ENCODE measurements at regions of chr10 and their contacts with region 1.

Region 1: GRCh38 chr10:35126530-35127296 is at the start of gene CREM:
- DNase-seq: peak; percentile 100
- H3K4me3 Mint-ChIP-seq: peak within 1 kb of the TSS; percentile 81
- H3K27ac Mint-ChIP-seq: peak within 1 kb of the TSS; percentile 95
- H3K4me1 Mint-ChIP-seq: peaks cover 48% of the 10 kb centered on the region
- H3K27me3 Mint-ChIP-seq: no peaks in the 10 kb centered on the region
- total RNA-seq, gene CREM: 107 to 111 TPM

Region 2: GRCh38 chr10:34584164-34584563 is 542.5 kb before region 1 on chr10:
- CTCF ChIA-PET with region 1: no interaction called
- intact Hi-C with region 1: no loop called
- DNase-seq: no peak
- H3K4me3 Mint-ChIP-seq: no peak overlapping the region
- H3K27ac Mint-ChIP-seq: no peak overlapping the region
- H3K4me1 Mint-ChIP-seq: no peaks in the 10 kb centered on the region
- H3K27me3 Mint-ChIP-seq: peaks cover 2% of the 10 kb centered on the region

Region 3: GRCh38 chr10:34994565-34995142 is 132.1 kb before region 1 on chr10:
- CTCF ChIA-PET with region 1: interaction called, 9 read pairs
- intact Hi-C with region 1: loop called (anchors 2 kb)
- DNase-seq: peak; percentile 78
- H3K4me3 Mint-ChIP-seq: no peak overlapping the region
- H3K27ac Mint-ChIP-seq: peak overlapping the region; percentile 70
- H3K4me1 Mint-ChIP-seq: peaks cover 18% of the 10 kb centered on the region
- H3K27me3 Mint-ChIP-seq: no peaks in the 10 kb centered on the region

Region 4: DNA sequence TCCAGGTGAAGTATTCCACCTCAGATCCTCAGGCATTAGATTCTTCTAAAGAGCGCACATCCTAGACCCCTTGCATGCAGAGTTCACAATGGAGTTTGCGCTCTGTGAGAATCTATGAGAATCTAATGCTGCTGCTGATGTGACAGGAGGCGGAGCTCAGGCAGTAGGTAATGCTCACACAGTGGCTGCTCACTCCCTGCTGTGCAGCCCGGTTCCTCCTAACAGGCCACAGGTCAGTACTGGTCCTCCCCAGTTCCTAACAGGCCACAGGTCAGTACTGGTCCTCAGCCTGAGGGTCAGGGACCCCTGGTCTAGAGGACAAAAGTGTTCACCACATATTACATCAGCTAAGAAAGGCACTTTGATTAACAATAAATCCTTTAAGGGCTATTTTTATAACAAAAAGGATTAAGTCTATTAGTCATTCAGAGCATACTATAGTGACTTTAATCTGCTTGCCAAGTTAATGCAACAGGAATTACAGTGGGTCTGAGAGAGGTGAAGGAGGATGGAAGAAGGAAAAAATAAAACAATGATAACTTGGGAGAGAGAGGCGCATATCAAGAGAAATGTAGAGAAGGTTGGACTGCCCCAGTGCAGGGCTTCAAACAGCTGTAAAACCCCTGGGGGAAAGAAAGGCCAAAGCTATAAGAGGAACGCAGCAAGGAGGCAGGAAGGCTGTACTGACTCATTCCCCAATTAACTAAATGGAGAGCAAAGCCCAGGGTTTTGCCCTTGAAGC is 85.8 kb before region 1 on chr10:
- CTCF ChIA-PET with region 1: no interaction called
- intact Hi-C with region 1: no loop called
- DNase-seq: no peak
- H3K4me3 Mint-ChIP-seq: no peak overlapping the region
- H3K27ac Mint-ChIP-seq: peak overlapping the region; percentile 2
- H3K4me1 Mint-ChIP-seq: no peaks in the 10 kb centered on the region
- H3K27me3 Mint-ChIP-seq: no peaks in the 10 kb centered on the region

Region 5: GRCh38 chr10:35153716-35154479 is 27.2 kb after region 1 on chr10:
- CTCF ChIA-PET with region 1: interaction called, 6 read pairs
- intact Hi-C with region 1: loop called (anchors 1 kb)
- DNase-seq: no peak
- H3K4me3 Mint-ChIP-seq: no peak overlapping the region
- H3K27ac Mint-ChIP-seq: no peak overlapping the region
- H3K4me1 Mint-ChIP-seq: peaks cover 36% of the 10 kb centered on the region
- H3K27me3 Mint-ChIP-seq: no peaks in the 10 kb centered on the region

Region 6: DNA sequence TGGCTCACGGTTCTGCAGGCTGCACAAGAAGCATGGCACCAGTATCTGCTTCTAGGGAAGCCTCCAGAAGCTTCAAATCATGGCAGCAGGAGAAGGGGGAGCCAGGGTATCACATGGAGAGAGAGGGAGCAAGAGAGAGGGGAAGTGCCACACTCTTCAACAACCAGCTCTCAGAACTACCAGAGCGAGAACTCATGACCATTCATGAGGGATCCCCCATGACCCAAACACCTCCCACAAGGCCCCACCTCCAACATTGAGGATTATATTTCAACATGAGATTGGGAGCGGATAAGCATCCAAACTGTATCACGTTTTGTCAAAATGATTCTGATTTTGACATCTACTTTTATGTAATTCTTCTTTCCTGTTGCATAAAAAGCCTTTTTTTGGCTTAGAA is 38.4 kb after region 1 on chr10:
- CTCF ChIA-PET with region 1: no interaction called
- intact Hi-C with region 1: no loop called
- DNase-seq: no peak
- H3K4me3 Mint-ChIP-seq: no peak overlapping the region
- H3K27ac Mint-ChIP-seq: no peak overlapping the region
- H3K4me1 Mint-ChIP-seq: no peaks in the 10 kb centered on the region
- H3K27me3 Mint-ChIP-seq: no peaks in the 10 kb centered on the region

Region 7: DNA sequence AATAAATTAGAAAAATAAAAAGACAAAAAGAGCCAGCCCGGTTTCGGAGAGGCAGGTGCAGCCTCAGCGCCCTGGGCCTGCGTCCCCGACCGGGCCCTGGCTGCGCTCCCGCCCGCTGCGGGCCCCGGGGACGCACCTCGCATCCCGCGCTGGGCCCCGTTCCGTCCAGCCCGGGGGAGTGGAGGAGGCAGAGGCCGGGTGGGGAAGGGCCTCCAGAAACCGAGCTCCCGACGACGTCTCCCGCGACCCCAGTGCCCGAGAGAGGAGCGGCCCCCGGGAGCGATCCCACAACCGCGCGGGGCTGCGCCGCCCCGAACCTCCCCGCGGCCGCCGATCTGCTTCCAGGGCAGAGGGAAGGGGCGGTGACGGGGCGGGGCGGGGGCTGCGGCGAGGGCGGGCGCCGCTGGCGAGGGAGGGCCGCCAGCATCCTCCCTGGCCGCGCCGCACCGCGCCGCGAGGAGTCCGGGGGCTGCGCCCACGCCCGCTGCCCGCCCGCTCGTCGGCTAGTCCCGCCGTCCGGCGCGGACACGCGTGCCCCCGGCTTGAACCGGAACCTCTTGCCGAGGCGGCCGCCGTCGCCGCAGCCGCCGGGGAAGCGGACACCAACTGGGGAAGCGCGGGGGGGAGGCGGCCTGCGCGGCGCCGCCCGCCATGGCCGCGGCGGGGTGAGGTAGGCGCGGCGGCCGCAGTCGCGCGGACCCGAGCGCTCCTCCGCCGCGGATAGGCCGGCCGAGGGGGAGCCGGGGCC is 209.5 kb after region 1 on chr10 and contains the start of gene CCNY:
- CTCF ChIA-PET with region 1: interaction called, 3 read pairs
- intact Hi-C with region 1: loop called (anchors 1 kb)
- DNase-seq: peak; percentile 81
- H3K4me3 Mint-ChIP-seq: peak within 1 kb of the TSS; percentile 85
- H3K27ac Mint-ChIP-seq: peak within 1 kb of the TSS; percentile 87
- H3K4me1 Mint-ChIP-seq: peaks cover 71% of the 10 kb centered on the region
- H3K27me3 Mint-ChIP-seq: no peaks in the 10 kb centered on the region
- total RNA-seq, gene CCNY: 31.2 to 32.1 TPM

Region 8: GRCh38 chr10:35355971-35356724 is 229.4 kb after region 1 on chr10:
- CTCF ChIA-PET with region 1: no interaction called
- intact Hi-C with region 1: loop called (anchors 2 kb)
- DNase-seq: peak; percentile 31
- H3K4me3 Mint-ChIP-seq: peak overlapping the region; percentile 8
- H3K27ac Mint-ChIP-seq: peak overlapping the region; percentile 68
- H3K4me1 Mint-ChIP-seq: peaks cover 71% of the 10 kb centered on the region
- H3K27me3 Mint-ChIP-seq: no peaks in the 10 kb centered on the region

Region 9: GRCh38 chr10:35563261-35563891 is 436.7 kb after region 1 on chr10:
- CTCF ChIA-PET with region 1: interaction called, 6 read pairs
- intact Hi-C with region 1: loop called (anchors 2 kb)
- DNase-seq: peak; percentile 61
- H3K4me3 Mint-ChIP-seq: no peak overlapping the region
- H3K27ac Mint-ChIP-seq: no peak overlapping the region
- H3K4me1 Mint-ChIP-seq: peaks cover 2% of the 10 kb centered on the region
- H3K27me3 Mint-ChIP-seq: no peaks in the 10 kb centered on the region

Region 10: DNA sequence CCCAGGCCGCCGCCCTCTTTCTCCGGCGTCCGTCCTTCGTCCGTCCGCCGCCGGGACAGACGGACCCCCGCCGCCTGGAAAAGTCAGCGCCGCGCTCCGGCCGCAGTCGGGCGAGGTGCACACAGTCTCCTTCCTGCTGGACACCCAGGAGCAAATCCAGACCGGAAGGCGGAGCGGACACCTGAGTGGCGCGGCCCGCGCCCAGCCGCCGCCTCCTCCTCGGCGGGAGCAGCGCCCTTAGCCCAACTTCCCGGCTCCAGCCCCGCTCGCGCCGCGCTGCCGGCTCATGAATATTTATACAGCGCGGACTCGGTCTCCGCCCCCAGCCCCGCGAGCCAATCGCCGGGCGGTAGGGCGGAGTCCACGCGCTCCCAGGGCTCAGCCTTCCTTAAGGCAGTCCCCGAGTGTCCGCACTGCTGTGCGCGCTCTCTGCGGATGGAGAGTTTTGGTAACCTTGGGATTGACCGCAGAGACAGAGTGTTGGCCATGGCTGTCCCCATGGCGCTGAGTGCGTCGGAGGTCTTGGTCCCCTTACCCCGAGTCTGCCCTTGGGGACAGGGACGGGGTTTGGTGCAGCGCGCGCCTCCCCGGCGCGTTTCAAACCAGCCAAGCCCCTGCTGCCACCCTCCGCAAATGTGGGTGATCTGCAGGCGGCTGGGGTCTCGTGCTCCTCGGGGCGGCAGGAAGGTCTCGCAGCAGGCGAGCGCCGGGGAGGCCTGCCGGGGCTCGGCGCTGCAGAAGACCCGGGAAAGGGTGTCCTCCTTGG is 515.5 kb after region 1 on chr10 and contains the start of gene FZD8:
- CTCF ChIA-PET with region 1: no interaction called
- intact Hi-C with region 1: loop called (anchors 1 kb)
- DNase-seq: peak; percentile 75
- H3K4me3 Mint-ChIP-seq: peak within 1 kb of the TSS; percentile 78
- H3K27ac Mint-ChIP-seq: no peak within 1 kb of the TSS
- H3K4me1 Mint-ChIP-seq: peaks cover 19% of the 10 kb centered on the region
- H3K27me3 Mint-ChIP-seq: peaks cover 41% of the 10 kb centered on the region
- total RNA-seq, gene FZD8: 0.15 to 0.19 TPM

Measured in activated naive CD4-positive, alpha-beta T cell treated with anti-CD3 and anti-CD28 coated beads for 36 hours (primary cell).